Psoas muscle (tissue), 8 donors: ENCODE measurements at regions of chr14 and their contacts with region 1.

Region 1: GRCh38 chr14:89973234-89973823 is 17.6 kb downstream of the TDP1 start:
- DNase-seq: peak; percentile 54 to 74
- ATAC-seq: peak; percentile 86 to 93 (median 89)
- H3K4me3 ChIP-seq: no peak overlapping the region
- H3K27ac ChIP-seq: no peak overlapping the region
- H3K4me1 ChIP-seq: no peaks in the 10 kb centered on the region
- H3K27me3 ChIP-seq: no peaks in the 10 kb centered on the region
- CTCF ChIP-seq: peak; percentile 86

Region 2: DNA sequence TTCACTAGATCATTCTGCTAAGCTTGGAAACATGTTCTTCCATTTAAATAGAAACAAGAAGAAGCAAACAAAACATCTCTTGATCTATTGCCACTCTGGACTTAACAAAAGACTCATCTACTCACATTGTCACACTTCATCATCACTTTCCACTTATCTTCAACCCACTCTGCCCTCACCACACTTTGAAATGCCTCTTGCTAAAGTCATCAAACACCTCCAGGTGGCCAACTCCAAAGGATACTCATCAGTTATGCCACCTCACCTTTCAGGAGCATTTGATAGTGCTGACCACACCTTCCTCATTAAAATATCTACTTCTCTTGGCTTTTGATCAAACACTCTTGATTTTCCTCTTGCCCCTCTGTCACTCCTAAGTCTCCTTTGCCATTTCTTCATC is 26.0 kb before region 1 on chr14:
- intact Hi-C with region 1: loop called in 1 of 2 experiments (anchors 2 kb)
- DNase-seq: no peak
- ATAC-seq: no peak
- H3K4me3 ChIP-seq: no peak overlapping the region
- H3K27ac ChIP-seq: no peak overlapping the region
- H3K4me1 ChIP-seq: no peaks in the 10 kb centered on the region
- H3K27me3 ChIP-seq: no peaks in the 10 kb centered on the region
- CTCF ChIP-seq: no peak

Region 3: DNA sequence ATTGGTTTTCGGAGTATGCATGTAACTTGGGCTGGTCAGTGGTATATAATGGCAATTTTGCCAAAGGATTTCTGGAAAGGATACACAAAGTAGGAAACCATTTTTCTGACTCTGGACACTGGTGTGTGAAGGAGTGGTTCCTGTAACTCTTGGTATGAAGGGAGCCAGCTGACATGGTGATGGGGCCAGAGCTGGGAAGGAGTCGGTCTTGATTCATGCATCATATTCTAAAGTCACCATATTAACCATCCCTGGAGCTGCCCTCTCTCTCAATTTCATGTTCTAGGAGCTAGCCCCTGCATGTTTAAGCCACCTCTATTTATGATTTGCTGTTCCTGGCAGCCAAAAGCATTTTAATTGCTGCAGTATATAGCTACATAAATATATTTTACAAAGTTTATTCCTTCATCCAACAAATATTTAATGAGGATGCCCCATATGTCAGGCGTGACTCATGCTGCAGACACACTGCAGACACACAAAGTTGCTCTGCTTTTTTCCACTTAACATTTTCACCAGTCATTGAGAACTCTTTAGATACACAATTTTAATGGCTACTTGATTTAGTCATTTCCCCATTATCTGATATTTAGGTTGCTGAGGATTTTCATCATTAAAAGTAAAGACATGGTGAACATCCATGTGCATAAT is 204.3 kb after region 1 on chr14:
- intact Hi-C with region 1: no loop called
- DNase-seq: no peak
- ATAC-seq: no peak
- H3K4me3 ChIP-seq: no peak overlapping the region
- H3K27ac ChIP-seq: no peak overlapping the region
- H3K4me1 ChIP-seq: no peaks in the 10 kb centered on the region
- H3K27me3 ChIP-seq: no peaks in the 10 kb centered on the region
- CTCF ChIP-seq: no peak

Region 4: DNA sequence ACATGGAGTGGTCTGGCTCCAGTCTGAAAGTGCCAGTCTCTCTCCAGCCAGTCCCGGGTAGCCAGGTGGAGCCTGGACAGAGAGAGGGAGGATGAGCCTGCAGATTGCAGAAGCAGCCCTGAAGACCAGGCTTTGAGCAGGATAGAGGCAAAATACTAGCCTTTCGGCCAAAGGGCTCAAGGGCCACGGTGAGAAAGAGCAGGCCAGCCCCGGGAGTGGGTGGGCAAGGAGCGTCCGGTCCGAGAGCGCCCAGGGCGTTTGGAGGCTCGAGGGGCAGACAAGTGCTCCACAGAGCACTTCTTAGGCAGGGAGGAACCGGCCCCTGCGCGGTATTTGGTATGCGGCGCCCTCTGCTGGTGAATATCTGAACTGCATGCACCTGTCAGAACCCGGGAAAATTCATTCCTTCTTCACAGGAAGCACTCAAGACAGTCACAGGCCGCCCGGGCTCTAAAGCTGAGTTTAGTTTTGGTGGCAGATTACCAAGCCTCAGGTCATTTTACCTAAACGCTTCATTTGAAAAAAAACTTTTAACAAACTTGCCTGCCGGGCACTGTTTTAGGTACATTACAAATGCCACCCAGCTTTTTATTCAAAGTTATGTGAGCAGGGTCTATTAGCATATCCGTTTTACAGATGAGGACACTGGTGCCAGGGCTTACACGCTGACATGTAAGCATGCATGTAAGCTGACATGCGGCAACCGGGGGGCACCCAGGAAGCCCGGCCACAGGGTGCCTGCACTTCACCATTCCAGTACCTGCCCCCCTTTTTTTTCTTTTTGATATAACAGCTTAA is 262.0 kb after region 1 on chr14:
- intact Hi-C with region 1: loop called in 1 of 2 experiments (anchors 5 kb)
- DNase-seq: peak; percentile 44 to 57
- ATAC-seq: peak in 2 of 4 donors; percentile 30
- H3K4me3 ChIP-seq: no peak overlapping the region
- H3K27ac ChIP-seq: no peak overlapping the region
- H3K4me1 ChIP-seq: no peaks in the 10 kb centered on the region
- H3K27me3 ChIP-seq: peaks cover 0 to 16% (median 6%) of the 10 kb centered on the region in 3 donors
- CTCF ChIP-seq: peak; percentile 78